Posterior vena cava (tissue), 2 donors: ENCODE measurements at regions of chr5 and their contacts with region 1.

Region 1: DNA sequence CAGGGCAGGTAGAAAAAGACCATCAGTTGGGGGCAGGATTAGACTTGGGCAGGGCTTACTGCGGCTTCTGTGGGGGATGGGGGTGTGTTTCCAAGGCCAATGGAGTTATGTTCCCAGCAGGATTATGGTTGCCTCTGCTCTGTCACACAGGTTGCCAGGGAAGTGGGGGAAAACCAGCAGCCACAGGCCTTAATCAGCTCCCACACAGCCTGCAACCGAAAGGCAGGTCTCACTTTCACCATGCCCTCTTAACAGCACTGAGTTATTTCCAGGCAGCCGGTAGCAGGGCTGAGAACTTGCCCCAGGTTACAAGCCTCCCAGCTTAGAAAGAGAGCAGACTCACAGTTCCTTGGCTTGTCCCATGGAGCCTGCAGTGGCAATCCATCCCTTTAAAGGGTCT is 205.5 kb downstream of the FGF10 start:
- DNase-seq: no peak

Region 2: DNA sequence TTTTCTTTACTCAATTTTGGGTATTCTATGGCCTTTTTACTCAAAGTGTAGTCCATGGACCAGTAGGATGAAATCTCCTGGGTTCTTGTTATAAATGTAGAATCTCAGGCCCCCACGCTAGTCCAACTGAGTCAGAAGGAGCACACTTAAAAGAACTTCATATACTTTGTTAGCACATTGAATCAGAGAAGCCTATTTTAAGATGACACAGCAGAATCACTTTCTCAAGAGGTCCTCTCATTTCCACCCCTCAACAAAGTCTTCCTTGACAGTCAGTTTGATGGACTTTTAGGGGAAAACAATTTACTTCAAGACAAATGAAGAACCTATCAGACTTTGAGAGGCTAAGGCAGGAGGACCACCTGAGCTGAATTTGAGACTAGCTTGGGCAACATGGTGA is 243.2 kb after region 1 on chr5:
- intact Hi-C with region 1: no loop called
- DNase-seq: no peak

Region 3: DNA sequence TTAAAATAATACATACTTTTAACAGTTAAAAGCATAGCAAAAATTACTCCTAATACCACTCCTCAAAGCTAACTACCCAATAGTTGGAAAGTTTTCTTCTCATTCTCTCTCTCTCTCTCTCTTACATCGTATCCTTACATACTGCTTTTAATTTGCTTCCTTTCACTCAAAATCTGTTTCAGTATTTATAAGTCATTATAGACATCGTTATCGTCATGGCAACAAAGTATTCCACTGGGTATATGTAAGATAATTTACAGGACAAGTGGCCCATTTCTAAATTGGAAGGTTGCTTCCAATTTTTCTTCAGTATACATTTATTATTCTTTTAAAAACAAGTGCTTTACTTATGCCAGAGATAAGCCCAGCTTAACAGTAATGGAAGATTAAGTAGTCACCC is 659.7 kb after region 1 on chr5:
- intact Hi-C with region 1: loop called in 1 of 2 experiments (anchors 5 kb)
- DNase-seq: no peak